CD4-positive, alpha-beta memory T cell (primary cell): ENCODE measurements at regions of chr1 and their contacts with region 1.

Region 1: DNA sequence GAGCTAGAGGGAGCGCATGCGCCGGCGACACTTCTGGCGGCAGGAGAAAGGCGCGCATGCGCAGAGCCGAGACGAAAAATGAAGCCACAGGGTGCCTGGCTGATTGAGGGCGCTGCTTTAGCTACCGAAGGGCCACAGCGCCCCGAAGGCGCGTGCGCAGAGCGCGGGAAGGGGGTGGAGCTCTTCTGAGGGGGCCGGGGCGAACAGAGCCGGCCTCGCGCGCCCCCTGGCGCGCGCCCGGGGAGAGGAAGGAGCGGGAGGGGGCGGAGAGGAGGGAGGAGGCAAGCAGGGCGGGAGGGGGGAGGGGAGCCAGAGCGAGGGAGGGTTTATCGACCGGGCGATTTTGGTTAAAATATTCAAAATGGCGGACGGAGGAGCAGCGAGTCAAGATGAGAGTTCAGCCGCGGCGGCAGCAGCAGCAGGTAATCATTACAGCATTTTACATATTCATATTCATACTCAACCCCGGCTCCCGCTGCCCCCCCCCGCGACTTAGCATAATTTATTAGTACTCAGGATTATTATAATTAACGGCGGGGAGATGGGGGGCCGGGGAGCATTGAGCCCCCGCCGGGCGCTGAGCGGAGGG is at the start of gene POU2F1:
- DNase-seq: peak; percentile 98 to 99 (median 98)
- H3K4me3 ChIP-seq: peak within 1 kb of the TSS; percentile 55 to 99
- H3K4me3 Mint-ChIP-seq: peak within 1 kb of the TSS; percentile 90 to 99 (median 94)
- H3K27ac ChIP-seq: peak within 1 kb of the TSS; percentile 90
- H3K27ac Mint-ChIP-seq: peak within 1 kb of the TSS; percentile 89 to 99 (median 97)
- H3K4me1 ChIP-seq: peaks cover 22% of the 10 kb centered on the region
- H3K4me1 Mint-ChIP-seq: peaks cover 19 to 47% (median 35%) of the 10 kb centered on the region in 4 donors
- H3K27me3 ChIP-seq: no peaks in the 10 kb centered on the region
- H3K27me3 Mint-ChIP-seq: no peaks in the 10 kb centered on the region
- total RNA-seq, gene POU2F1: 17.9 to 22.9 TPM

Region 2: GRCh38 chr1:166875734-166876539 is 344.7 kb before region 1 on chr1 and contains the start of gene TADA1:
- CTCF ChIA-PET with region 1: no interaction called
- POLR2A ChIA-PET with region 1: interaction called, 23 read pairs
- intact Hi-C with region 1: loop called (anchors 1 kb)
- DNase-seq: peak; percentile 96 to 99 (median 97)
- H3K4me3 ChIP-seq: peak within 1 kb of the TSS; percentile 52 to 88
- H3K4me3 Mint-ChIP-seq: peak within 1 kb of the TSS; percentile 95 to 100 (median 99)
- H3K27ac ChIP-seq: peak within 1 kb of the TSS; percentile 69
- H3K27ac Mint-ChIP-seq: peak within 1 kb of the TSS; percentile 92 to 99 (median 99)
- H3K4me1 ChIP-seq: peaks cover 32% of the 10 kb centered on the region
- H3K4me1 Mint-ChIP-seq: peaks cover 32 to 56% (median 45%) of the 10 kb centered on the region in 4 donors
- H3K27me3 ChIP-seq: no peaks in the 10 kb centered on the region
- H3K27me3 Mint-ChIP-seq: peaks cover 0 to 1% of the 10 kb centered on the region in 2 donors
- total RNA-seq, gene TADA1: 15.3 to 16.0 TPM

Region 3: GRCh38 chr1:167090314-167090942 is 130.2 kb before region 1 on chr1 and contains the start of gene GPA33:
- CTCF ChIA-PET with region 1: interaction called, 12 read pairs
- POLR2A ChIA-PET with region 1: interaction called, 16 read pairs
- intact Hi-C with region 1: no loop called
- DNase-seq: peak in 4 of 5 donors; percentile 60 to 70 (median 64)
- H3K4me3 ChIP-seq: peak within 1 kb of the TSS; percentile 2 to 44
- H3K4me3 Mint-ChIP-seq: peak within 1 kb of the TSS; percentile 73 to 88 (median 81)
- H3K27ac ChIP-seq: peak within 1 kb of the TSS; percentile 51
- H3K27ac Mint-ChIP-seq: peak within 1 kb of the TSS; percentile 89 to 98 (median 95)
- H3K4me1 ChIP-seq: peaks cover 42% of the 10 kb centered on the region
- H3K4me1 Mint-ChIP-seq: peaks cover 17 to 45% (median 34%) of the 10 kb centered on the region in 4 donors
- H3K27me3 ChIP-seq: no peaks in the 10 kb centered on the region
- H3K27me3 Mint-ChIP-seq: peaks cover 0 to 2% of the 10 kb centered on the region in 2 donors
- total RNA-seq, gene GPA33: 21.2 to 21.6 TPM

Region 4: DNA sequence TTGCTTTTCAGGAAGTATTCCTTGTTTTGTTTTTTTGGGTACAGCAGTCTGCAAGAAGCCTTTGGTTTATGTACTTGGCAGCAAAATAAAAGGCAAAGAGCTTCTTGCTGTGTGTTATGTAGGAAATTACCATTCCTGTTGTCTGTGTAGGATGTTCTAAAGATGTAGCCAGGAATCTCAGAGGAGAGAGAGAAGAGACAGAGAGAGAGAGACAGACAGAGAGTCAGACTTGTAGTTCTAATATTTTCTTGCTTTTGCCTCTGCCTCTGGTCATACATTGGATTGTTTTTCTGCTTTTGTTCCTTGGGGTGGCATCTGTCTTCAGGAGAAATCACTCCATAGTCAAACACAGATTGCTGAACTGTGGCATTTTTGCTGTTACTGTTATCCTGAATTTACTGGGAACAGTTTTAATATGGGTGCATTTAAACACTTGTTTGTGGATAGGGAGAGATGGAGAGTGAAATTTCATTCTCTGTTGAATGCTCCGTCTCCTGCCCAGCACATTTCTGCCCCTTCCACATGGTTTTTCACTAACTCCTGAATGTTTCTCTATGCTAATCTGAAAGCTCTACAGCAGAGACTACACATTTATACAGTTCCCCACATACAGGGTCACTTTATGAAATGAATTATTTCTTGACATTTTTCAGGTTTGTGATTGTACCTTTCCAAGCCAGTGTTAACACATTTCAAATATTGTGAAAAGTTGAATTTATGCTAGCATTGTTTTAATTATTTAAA is 49.9 kb after region 1 on chr1:
- CTCF ChIA-PET with region 1: interaction called, 15 read pairs
- POLR2A ChIA-PET with region 1: interaction called, 4 read pairs
- intact Hi-C with region 1: loop called (anchors 2 kb)
- DNase-seq: no peak
- H3K4me3 ChIP-seq: no peak overlapping the region
- H3K4me3 Mint-ChIP-seq: no peak overlapping the region
- H3K27ac ChIP-seq: no peak overlapping the region
- H3K27ac Mint-ChIP-seq: peak overlapping the region in 1 of 7 donors; percentile 7
- H3K4me1 ChIP-seq: peaks cover 5% of the 10 kb centered on the region
- H3K4me1 Mint-ChIP-seq: peaks cover 10 to 33% (median 13%) of the 10 kb centered on the region in 4 donors
- H3K27me3 ChIP-seq: no peaks in the 10 kb centered on the region
- H3K27me3 Mint-ChIP-seq: no peaks in the 10 kb centered on the region

Region 5: DNA sequence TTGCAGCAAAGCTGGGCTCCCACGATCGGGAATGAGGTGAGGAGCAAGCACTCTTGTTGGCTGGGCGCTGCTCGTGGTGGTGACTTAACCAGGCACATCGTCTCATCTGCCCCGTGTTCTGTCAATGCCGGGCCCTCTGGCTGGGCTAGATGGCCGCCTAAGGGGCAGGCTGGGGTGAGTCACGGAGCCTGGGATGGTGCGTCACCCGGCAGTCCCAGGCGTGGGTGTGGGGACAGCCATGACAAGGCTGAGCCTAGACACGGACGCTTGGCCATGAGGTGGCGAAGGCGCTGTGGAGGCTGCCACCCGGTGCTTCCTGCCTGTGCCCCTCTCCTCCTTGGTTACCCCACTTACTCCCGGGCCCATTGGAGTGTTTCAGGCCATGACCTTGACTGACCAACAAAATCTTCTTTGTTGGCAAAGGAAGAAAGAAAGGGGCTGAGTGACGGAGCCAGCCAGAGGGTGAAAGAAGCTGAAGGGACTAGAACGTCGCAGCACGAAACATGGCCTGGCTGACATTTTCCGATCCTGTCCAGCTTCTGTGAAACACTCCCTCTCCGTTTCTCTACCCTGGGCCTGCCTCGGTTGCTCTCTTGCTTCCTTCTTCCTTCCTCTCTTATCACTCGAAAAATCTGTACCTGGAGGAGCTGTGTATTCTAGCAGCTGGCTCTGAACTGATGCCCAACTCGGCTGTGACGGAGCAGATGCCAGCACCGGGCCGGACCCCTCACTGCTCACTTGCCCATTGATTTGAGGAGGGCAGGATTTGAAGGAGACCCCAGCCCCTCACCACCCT is 297.1 kb after region 1 on chr1:
- CTCF ChIA-PET with region 1: interaction called, 24 read pairs
- POLR2A ChIA-PET with region 1: interaction called, 73 read pairs
- intact Hi-C with region 1: loop called (anchors 2 kb)
- DNase-seq: peak; percentile 71 to 94 (median 76)
- H3K4me3 ChIP-seq: peak overlapping the region; percentile 82 to 83
- H3K4me3 Mint-ChIP-seq: peak overlapping the region; percentile 95 to 100 (median 99)
- H3K27ac ChIP-seq: peak overlapping the region; percentile 94
- H3K27ac Mint-ChIP-seq: peak overlapping the region; percentile 97 to 100 (median 99)
- H3K4me1 ChIP-seq: peaks cover 49% of the 10 kb centered on the region
- H3K4me1 Mint-ChIP-seq: peaks cover 22 to 70% (median 37%) of the 10 kb centered on the region in 4 donors
- H3K27me3 ChIP-seq: no peaks in the 10 kb centered on the region
- H3K27me3 Mint-ChIP-seq: no peaks in the 10 kb centered on the region

Region 6: DNA sequence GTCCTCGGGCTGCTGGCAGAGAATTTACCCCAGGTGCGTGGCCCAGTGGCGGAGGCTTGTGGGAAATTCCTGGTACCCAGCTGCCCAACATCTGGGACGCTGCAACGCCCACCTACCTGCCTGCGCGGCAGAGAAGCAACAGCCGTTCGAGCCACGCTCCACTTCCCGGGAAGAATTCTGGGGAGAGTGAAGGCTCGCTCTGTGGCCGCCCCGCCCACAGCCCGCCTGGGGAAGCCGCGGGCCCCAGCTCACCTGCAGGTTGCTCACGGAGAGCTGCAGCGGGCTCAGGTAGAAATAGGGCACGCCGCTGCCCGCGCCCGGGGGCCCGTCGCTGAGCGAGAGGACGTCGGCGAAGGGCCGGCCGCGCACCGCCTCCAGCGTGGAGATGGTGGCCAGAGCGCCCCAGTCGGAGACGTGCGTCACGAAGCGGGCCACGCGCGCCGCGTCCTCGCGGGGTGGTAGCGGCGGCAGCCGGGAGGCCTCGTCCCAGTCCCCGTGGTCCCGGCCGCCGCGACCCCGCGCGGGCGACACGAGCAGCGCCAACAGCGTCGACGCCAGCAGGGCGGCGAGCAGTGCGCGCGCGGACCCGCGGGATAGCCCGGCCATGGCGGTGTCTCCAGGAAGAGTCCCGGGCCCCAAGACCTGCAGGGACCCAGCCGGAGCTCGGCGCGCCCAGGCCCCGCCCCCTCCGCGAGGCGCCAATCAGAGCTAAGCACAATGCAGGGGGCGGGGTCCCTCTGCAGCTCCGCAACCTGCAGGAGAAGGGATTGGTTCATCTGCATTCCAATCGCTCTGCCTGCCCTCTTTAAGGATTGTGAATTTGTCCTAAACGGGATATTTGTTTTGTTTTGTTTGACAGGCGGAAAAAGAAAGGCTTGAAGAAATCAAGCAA is 332.8 kb after region 1 on chr1 and contains the start of gene CREG1:
- CTCF ChIA-PET with region 1: interaction called, 8 read pairs
- POLR2A ChIA-PET with region 1: interaction called, 10 read pairs
- intact Hi-C with region 1: loop called (anchors 1 kb)
- DNase-seq: peak; percentile 85 to 93 (median 87)
- H3K4me3 ChIP-seq: peak within 1 kb of the TSS; percentile 74 to 77
- H3K4me3 Mint-ChIP-seq: peak within 1 kb of the TSS; percentile 87 to 94 (median 90)
- H3K27ac ChIP-seq: peak within 1 kb of the TSS; percentile 41
- H3K27ac Mint-ChIP-seq: peak within 1 kb of the TSS; percentile 36 to 89 (median 84)
- H3K4me1 ChIP-seq: peaks cover 30% of the 10 kb centered on the region
- H3K4me1 Mint-ChIP-seq: peaks cover 23 to 56% (median 39%) of the 10 kb centered on the region in 4 donors
- H3K27me3 ChIP-seq: no peaks in the 10 kb centered on the region
- H3K27me3 Mint-ChIP-seq: peaks cover 0 to 3% of the 10 kb centered on the region in 2 donors
- total RNA-seq, gene CREG1: 21.0 to 21.7 TPM

Region 7: DNA sequence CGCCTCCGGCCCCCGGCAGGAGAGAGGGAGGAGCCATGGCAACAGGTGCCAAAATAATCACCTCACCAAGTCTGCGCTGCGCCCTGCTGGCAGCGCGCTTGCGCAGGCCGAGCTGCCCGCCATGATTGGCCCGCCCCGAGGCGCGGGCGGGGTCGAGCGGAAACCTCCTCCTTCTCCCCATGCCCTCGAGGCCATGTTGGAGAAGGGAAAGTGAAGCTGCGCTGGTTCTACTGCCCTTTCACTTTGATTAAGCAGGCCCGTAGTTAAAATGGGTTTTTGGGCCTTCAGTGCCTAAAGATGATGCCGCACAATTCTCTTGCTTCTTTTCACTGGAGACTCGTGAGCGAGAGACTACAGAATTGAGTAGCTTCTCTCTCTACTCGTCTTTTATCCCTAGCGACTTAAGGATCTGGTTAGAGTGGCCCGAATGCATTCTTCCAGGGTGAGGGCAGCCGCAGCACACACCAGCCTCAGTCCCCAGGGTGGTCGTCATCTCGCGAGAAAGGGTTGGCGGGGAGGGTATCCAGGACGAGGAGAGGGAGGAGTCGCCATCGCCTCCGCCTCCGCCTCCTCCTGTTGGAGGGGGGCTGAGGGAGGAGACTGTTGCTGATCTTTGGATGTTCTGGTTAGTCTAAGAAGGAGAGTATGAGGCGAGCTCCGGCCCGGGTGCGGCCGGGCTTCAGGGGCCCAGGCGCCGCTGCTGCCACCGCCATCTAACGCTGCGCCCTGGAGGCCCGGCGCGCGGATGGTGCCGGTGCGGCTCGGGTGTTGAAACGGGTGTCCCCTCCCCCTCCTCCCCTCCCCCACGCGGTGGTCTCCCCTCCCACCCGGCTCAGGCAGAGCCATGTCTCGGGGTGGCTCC is 715.7 kb after region 1 on chr1 and contains the start of gene DCAF6:
- CTCF ChIA-PET with region 1: interaction called, 5 read pairs
- POLR2A ChIA-PET with region 1: interaction called, 6 read pairs
- intact Hi-C with region 1: loop called (anchors 1 kb)
- DNase-seq: peak; percentile 98 to 99 (median 99)
- H3K4me3 ChIP-seq: peak within 1 kb of the TSS; percentile 69 to 90
- H3K4me3 Mint-ChIP-seq: peak within 1 kb of the TSS; percentile 90 to 99 (median 94)
- H3K27ac ChIP-seq: peak within 1 kb of the TSS; percentile 85
- H3K27ac Mint-ChIP-seq: peak within 1 kb of the TSS; percentile 97 to 100 (median 98)
- H3K4me1 ChIP-seq: peaks cover 28% of the 10 kb centered on the region
- H3K4me1 Mint-ChIP-seq: peaks cover 29 to 58% (median 43%) of the 10 kb centered on the region in 4 donors
- H3K27me3 ChIP-seq: no peaks in the 10 kb centered on the region
- H3K27me3 Mint-ChIP-seq: no peaks in the 10 kb centered on the region
- total RNA-seq, gene DCAF6: 28.3 to 29.2 TPM